Activated B cell treated with CpG ODN at 0.5 μM for 24 hours (primary cell): ENCODE measurements at regions of chr2 and their contacts with region 1.

Region 1: GRCh38 chr2:84905181-84906107 is at the start of gene TMSB10:
- DNase-seq: peak; percentile 94
- ATAC-seq: peak; percentile 84
- H3K4me3 Mint-ChIP-seq: peak within 1 kb of the TSS; percentile 93
- H3K27ac Mint-ChIP-seq: peak within 1 kb of the TSS; percentile 87
- H3K4me1 Mint-ChIP-seq: peaks cover 55% of the 10 kb centered on the region
- H3K27me3 Mint-ChIP-seq: no peaks in the 10 kb centered on the region
- CTCF ChIP-seq: no peak
- total RNA-seq, gene TMSB10: 925 and 1,069 TPM in 2 replicates

Region 2: GRCh38 chr2:84409531-84409930 is 495.9 kb before region 1 on chr2:
- CTCF ChIA-PET with region 1: no interaction called
- POLR2A ChIA-PET with region 1: no interaction called
- intact Hi-C with region 1: no loop called
- DNase-seq: no peak
- ATAC-seq: no peak
- H3K4me3 Mint-ChIP-seq: no peak overlapping the region
- H3K27ac Mint-ChIP-seq: no peak overlapping the region
- H3K4me1 Mint-ChIP-seq: no peaks in the 10 kb centered on the region
- H3K27me3 Mint-ChIP-seq: peaks cover 8% of the 10 kb centered on the region
- CTCF ChIP-seq: no peak

Region 3: GRCh38 chr2:84876369-84876768 is 29.1 kb before region 1 on chr2:
- CTCF ChIA-PET with region 1: interaction called, 32 read pairs
- POLR2A ChIA-PET with region 1: interaction called, 85 read pairs
- intact Hi-C with region 1: no loop called
- DNase-seq: no peak
- ATAC-seq: no peak
- H3K4me3 Mint-ChIP-seq: no peak overlapping the region
- H3K27ac Mint-ChIP-seq: no peak overlapping the region
- H3K4me1 Mint-ChIP-seq: peaks cover 23% of the 10 kb centered on the region
- H3K27me3 Mint-ChIP-seq: no peaks in the 10 kb centered on the region
- CTCF ChIP-seq: no peak

Region 4: DNA sequence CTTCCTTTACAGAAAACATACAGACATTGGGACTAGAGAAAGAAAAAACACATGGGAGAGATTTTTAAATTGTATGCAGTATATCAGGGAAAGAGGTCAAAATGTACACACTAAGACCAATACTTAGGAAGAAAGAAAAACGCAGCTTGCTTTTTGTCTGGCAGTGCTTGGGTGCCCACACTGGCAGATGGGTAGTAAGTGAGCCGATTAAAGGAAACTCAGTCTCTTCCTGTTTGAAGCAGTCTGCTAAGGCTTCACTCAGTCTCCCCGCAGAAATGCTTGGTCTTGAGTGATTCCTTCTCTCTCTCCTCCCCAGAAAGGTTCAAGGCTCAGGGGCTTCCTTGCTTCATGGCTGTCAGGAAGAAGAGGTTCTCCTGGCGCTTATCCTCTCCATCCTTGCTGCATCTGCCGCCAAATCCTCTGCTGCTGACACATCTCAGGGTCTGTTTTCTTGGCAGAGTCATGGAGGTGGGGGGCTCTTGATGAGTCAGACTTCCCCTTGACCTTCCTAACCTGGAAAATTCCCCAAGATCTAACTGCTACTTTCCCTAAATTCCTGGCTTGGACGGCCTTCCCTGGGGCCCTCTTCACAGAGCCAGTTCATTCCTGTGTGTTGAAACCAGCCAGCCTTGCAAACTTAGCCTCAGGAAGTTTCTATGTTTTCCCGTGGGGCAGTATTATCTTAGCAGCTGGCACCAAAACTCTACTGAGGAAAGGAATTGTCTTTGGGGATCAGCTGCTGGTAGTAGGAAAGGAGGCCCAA is 10.5 kb before region 1 on chr2:
- CTCF ChIA-PET with region 1: interaction called, 14 read pairs
- POLR2A ChIA-PET with region 1: interaction called, 82 read pairs
- intact Hi-C with region 1: loop called (anchors 1 kb)
- DNase-seq: no peak
- ATAC-seq: peak; percentile 68
- H3K4me3 Mint-ChIP-seq: peak overlapping the region; percentile 60
- H3K27ac Mint-ChIP-seq: peak overlapping the region; percentile 89
- H3K4me1 Mint-ChIP-seq: peaks cover 46% of the 10 kb centered on the region
- H3K27me3 Mint-ChIP-seq: no peaks in the 10 kb centered on the region
- CTCF ChIP-seq: no peak

Region 5: DNA sequence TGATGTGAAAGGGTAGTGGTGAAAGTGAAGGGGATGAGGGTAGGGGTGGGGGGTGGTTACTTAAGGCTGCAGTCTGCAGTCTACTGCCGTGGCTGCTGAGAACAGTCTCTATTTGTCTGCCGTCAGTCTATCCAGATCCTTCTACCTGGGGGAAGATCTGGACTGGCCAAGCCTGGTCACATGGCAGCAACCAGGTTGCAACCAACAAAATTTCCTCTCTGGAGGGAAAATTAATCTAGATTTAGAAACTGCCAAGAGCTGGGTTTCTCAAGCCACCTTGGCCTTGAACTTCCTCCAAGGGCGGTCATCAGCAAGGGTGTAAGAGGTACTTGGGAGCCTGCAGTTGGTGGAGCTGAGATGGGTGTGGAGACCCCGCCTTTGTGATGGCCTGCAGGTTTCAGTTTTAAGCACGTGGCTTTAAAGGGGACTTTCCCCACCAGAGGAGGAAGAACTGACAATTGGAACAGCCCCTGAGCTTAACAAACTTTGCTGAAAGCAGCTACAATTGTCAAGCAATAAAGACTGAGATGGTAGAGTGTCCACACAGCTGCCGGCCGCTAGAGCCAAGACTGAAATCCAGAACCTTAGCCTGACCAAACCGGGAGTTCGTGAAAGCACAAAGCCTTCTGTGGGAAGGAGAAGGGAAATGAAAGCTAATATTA is 34.1 kb after region 1 on chr2:
- CTCF ChIA-PET with region 1: interaction called, 8 read pairs
- POLR2A ChIA-PET with region 1: interaction called, 81 read pairs
- intact Hi-C with region 1: loop called (anchors 1 kb)
- DNase-seq: peak; percentile 63
- ATAC-seq: peak; percentile 88
- H3K4me3 Mint-ChIP-seq: peak overlapping the region; percentile 69
- H3K27ac Mint-ChIP-seq: peak overlapping the region; percentile 94
- H3K4me1 Mint-ChIP-seq: peaks cover 62% of the 10 kb centered on the region
- H3K27me3 Mint-ChIP-seq: no peaks in the 10 kb centered on the region
- CTCF ChIP-seq: no peak

Region 6: GRCh38 chr2:84970868-84971509 is 65.5 kb after region 1 on chr2 and contains the start of gene KCMF1:
- CTCF ChIA-PET with region 1: no interaction called
- POLR2A ChIA-PET with region 1: interaction called, 26 read pairs
- intact Hi-C with region 1: loop called (anchors 1 kb)
- DNase-seq: peak; percentile 77
- ATAC-seq: peak; percentile 56
- H3K4me3 Mint-ChIP-seq: peak within 1 kb of the TSS; percentile 97
- H3K27ac Mint-ChIP-seq: peak within 1 kb of the TSS; percentile 98
- H3K4me1 Mint-ChIP-seq: peaks cover 57% of the 10 kb centered on the region
- H3K27me3 Mint-ChIP-seq: no peaks in the 10 kb centered on the region
- CTCF ChIP-seq: no peak
- total RNA-seq, gene KCMF1: 77.1 and 96.6 TPM in 2 replicates